ENCODE measurements at regions of chr2 and their contacts with region 1.

Region 1: DNA sequence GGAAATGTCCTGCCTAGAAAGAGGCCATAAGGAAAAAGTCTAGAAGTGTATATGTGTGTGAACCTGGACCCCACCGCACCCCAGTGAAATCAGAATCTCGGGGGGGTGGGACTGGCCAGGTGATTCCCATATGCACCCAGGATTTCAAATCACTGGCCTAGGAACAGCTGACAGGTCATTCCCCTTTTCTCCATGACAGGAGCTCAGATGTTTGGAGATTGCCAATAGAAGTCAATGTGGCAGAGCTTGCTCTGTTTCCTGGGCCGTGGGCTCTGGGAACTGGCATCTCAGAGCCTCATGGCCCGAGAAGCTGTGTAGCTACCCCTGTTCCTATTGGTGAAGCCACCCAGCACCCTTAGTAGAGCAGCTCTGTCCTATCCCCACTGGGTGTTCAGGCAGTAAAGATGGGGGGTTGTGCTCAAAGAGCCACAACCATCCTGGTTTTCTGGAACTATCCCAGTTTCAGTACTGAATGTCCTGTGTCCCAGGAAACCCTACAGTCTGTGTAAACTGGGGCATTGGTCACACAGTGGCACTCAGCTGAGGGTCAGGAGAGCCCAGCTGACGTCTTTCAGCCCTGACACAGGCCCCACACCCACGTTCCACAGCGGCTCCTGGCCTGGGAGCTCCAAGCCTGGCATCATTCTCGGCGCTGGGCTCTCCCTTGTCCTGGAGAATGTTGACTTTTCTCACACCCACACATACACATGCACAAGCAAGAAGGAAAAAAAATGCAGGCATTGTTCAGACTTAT is 18.9 kb downstream of the GNLY start:
- DNase-seq: peak in 3 of 4 donors; percentile 53 to 93 (median 92)
- ATAC-seq: peak; percentile 64
- H3K4me3 ChIP-seq: peak overlapping the region in 1 of 2 donors; percentile 34
- H3K27ac ChIP-seq: peak overlapping the region; percentile 94 to 95
- H3K4me1 ChIP-seq: peaks cover 48 to 96% of the 10 kb centered on the region in 2 donors
- H3K27me3 ChIP-seq: no peaks in the 10 kb centered on the region
- CTCF ChIP-seq: no peak

Region 2: DNA sequence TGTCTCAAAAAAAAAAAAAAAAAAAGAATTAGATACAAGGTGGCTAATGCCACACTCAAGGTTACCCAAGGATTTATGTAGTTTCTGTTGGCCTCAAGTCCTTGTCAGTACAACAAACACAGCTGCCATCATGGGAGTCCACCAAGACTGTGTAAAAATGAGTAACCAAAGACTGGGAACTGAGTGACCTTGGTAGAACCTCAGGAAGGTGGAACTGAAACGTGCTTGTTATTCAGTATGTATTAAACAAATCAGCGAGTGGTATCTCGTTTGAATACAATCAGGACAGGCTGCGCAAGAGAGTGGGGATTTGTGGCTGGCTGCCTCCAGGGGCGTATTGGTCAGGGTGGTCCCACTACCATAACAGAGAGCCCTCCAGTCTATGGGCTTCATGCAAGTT is 43.5 kb before region 1 on chr2:
- intact Hi-C with region 1: loop called in 1 of 2 experiments (anchors 5 kb)
- DNase-seq: no peak
- ATAC-seq: no peak
- H3K4me3 ChIP-seq: no peak overlapping the region
- H3K27ac ChIP-seq: peak overlapping the region; percentile 23 to 61
- H3K4me1 ChIP-seq: peaks cover 0 to 60% of the 10 kb centered on the region in 2 donors
- H3K27me3 ChIP-seq: no peaks in the 10 kb centered on the region
- CTCF ChIP-seq: no peak